Naive thymus-derived CD4-positive, alpha-beta T cell (primary cell): ENCODE measurements at regions of chrX and their contacts with region 1.

Region 1: DNA sequence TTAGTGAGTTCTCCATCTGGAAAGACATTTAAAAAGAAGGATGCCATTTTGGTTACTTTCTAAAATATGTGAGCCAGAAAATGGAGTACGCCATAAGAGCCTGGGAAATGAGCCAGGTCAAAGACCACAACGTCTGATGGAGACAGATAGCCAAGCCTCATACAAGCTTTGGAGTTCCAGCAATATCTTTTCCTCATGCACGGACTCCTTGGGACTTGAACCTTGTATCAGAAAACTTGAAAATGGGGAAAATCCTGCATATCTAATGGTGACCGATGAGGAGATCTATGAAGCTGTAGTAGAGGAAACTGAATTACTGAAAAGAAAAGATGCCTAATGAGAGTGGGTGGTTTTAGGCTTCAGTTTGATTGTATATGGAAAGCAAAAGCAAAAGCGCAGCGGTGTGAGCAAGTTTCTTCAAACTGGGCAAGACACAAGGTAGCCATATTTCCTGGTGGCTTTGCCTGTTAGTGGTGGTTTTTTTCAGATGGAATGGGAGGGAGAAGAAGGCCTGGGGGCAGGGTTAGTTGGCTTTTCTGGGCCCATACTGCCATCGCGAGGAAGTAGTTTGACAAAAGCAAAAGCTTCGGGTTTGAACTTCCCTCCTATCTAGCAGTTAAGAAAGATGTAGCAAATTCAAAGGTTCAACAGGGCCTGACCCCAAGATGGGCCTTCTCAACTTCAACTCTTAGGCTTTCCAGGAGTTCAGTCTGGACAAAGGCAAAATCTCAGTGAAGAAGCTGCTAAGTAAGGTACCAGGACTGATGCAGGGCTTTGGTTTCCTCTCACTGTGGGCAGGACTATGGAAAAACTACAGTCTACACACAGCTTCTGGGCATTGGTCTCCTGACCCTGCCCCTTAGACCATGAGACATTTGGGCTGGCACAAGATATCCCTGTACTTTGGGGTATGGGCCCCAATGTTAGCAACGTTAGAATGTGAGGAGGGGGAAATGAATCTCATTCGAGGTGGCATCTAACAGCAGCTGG is 210.0 kb upstream of the STK26 start:
- DNase-seq: peak; percentile 36 to 97 (median 95)
- ATAC-seq: peak; percentile 96
- H3K4me3 ChIP-seq: peak overlapping the region; percentile 69
- H3K4me3 Mint-ChIP-seq: peak overlapping the region; percentile 78 to 98 (median 90)
- H3K27ac ChIP-seq: peak overlapping the region; percentile 75
- H3K27ac Mint-ChIP-seq: peak overlapping the region; percentile 92 to 98 (median 95)
- H3K4me1 ChIP-seq: peaks cover 9% of the 10 kb centered on the region in 2 donors
- H3K4me1 Mint-ChIP-seq: peaks cover 2 to 35% (median 28%) of the 10 kb centered on the region in 7 donors
- H3K27me3 ChIP-seq: no peaks in the 10 kb centered on the region
- H3K27me3 Mint-ChIP-seq: no peaks in the 10 kb centered on the region

Region 2: GRCh38 chrX:130086447-130087206 is 1726.5 kb before region 1 on chrX:
- CTCF ChIA-PET with region 1: no interaction called
- POLR2A ChIA-PET with region 1: no interaction called
- intact Hi-C with region 1: loop called (anchors 2 to 10 kb)
- DNase-seq: peak in 8 of 9 donors; percentile 64 to 79 (median 74)
- ATAC-seq: peak; percentile 74
- H3K4me3 ChIP-seq: peak overlapping the region; percentile 67
- H3K4me3 Mint-ChIP-seq: peak overlapping the region; percentile 86 to 93 (median 89)
- H3K27ac ChIP-seq: peak overlapping the region; percentile 66
- H3K27ac Mint-ChIP-seq: peak overlapping the region; percentile 76 to 96 (median 91)
- H3K4me1 ChIP-seq: peaks cover 22 to 35% of the 10 kb centered on the region in 2 donors
- H3K4me1 Mint-ChIP-seq: peaks cover 15 to 71% (median 60%) of the 10 kb centered on the region in 7 donors
- H3K27me3 ChIP-seq: no peaks in the 10 kb centered on the region
- H3K27me3 Mint-ChIP-seq: no peaks in the 10 kb centered on the region

Region 3: DNA sequence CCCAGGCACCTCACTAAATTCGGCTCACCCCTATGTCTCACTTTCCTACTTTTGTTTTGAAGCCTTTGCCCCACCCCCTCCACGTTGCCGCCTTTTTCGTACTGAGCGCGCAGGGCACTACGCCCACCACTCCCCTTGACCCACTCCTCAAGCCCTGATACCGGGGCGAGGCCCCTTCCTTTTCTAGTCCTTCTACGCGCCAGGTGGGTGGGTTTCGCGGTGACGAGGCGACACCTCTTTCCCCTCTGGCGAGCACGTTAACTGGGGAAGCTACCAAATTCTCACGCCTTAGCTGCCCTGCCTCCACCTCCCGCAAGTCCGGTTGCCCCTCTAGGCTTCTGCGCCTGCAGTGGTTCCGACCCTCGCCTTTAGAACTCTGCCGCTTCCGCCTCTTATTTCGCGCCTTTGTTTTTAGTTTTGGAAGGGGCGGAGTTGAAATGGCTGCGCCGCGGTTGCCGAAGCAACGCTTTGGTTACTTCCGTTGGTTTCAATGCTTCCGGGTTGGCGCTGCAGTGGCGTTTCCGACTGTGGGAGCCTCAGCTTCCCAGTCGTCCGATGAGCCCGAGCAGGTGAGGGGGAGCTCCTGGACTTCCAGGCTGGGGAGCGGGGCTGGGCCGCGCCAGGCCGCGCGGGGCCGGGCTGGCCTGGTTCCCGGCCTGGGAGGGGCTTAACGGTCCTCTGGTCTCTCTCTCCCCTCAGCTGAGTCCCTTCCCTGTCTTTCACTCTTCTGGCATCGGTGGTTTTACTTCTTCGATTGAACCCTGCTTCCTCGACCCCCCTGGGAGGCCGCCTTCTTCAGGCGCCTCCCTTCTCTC is 1473.5 kb before region 1 on chrX and contains the start of gene SLC25A14:
- CTCF ChIA-PET with region 1: no interaction called
- POLR2A ChIA-PET with region 1: no interaction called
- intact Hi-C with region 1: loop called in 1 of 2 experiments (anchors 5 kb)
- DNase-seq: peak; percentile 33 to 79 (median 72)
- ATAC-seq: peak; percentile 94
- H3K4me3 ChIP-seq: peak within 1 kb of the TSS; percentile 90
- H3K4me3 Mint-ChIP-seq: peak within 1 kb of the TSS; percentile 89 to 99 (median 94)
- H3K27ac ChIP-seq: peak within 1 kb of the TSS; percentile 68
- H3K27ac Mint-ChIP-seq: peak within 1 kb of the TSS; percentile 80 to 95 (median 90)
- H3K4me1 ChIP-seq: peaks cover 4 to 5% of the 10 kb centered on the region in 2 donors
- H3K4me1 Mint-ChIP-seq: peaks cover 7 to 25% (median 21%) of the 10 kb centered on the region in 7 donors
- H3K27me3 ChIP-seq: no peaks in the 10 kb centered on the region
- H3K27me3 Mint-ChIP-seq: no peaks in the 10 kb centered on the region
- total RNA-seq, gene SLC25A14: 10.7 to 14.3 (median 13.8) TPM

Region 4: GRCh38 chrX:130902783-130903613 is 910.1 kb before region 1 on chrX and contains the start of gene ENOX2:
- CTCF ChIA-PET with region 1: no interaction called
- POLR2A ChIA-PET with region 1: no interaction called
- intact Hi-C with region 1: loop called (anchors 1 to 2 kb)
- DNase-seq: peak; percentile 51 to 90 (median 83)
- ATAC-seq: peak; percentile 98
- H3K4me3 ChIP-seq: peak within 1 kb of the TSS; percentile 79
- H3K4me3 Mint-ChIP-seq: no peak within 1 kb of the TSS
- H3K27ac ChIP-seq: peak within 1 kb of the TSS; percentile 93
- H3K27ac Mint-ChIP-seq: peak within 1 kb of the TSS in 6 of 9 donors; percentile 51 to 91 (median 71)
- H3K4me1 ChIP-seq: peaks cover 0 to 5% of the 10 kb centered on the region in 2 donors
- H3K4me1 Mint-ChIP-seq: peaks cover 5 to 14% (median 12%) of the 10 kb centered on the region in 7 donors
- H3K27me3 ChIP-seq: no peaks in the 10 kb centered on the region
- H3K27me3 Mint-ChIP-seq: no peaks in the 10 kb centered on the region
- total RNA-seq, gene ENOX2: 10.3 to 15.3 (median 12.1) TPM

Region 5: GRCh38 chrX:130975947-130976346 is 837.2 kb before region 1 on chrX:
- CTCF ChIA-PET with region 1: no interaction called
- POLR2A ChIA-PET with region 1: no interaction called
- intact Hi-C with region 1: loop called in 1 of 2 experiments (anchors 1 kb)
- DNase-seq: peak in 6 of 9 donors; percentile 11 to 31 (median 16)
- ATAC-seq: peak; percentile 54
- H3K4me3 ChIP-seq: no peak overlapping the region
- H3K4me3 Mint-ChIP-seq: no peak overlapping the region
- H3K27ac ChIP-seq: no peak overlapping the region
- H3K27ac Mint-ChIP-seq: no peak overlapping the region
- H3K4me1 ChIP-seq: no peaks in the 10 kb centered on the region
- H3K4me1 Mint-ChIP-seq: no peaks in the 10 kb centered on the region
- H3K27me3 ChIP-seq: no peaks in the 10 kb centered on the region
- H3K27me3 Mint-ChIP-seq: peaks cover 0 to 6% (median 0%) of the 10 kb centered on the region in 5 donors

Region 6: DNA sequence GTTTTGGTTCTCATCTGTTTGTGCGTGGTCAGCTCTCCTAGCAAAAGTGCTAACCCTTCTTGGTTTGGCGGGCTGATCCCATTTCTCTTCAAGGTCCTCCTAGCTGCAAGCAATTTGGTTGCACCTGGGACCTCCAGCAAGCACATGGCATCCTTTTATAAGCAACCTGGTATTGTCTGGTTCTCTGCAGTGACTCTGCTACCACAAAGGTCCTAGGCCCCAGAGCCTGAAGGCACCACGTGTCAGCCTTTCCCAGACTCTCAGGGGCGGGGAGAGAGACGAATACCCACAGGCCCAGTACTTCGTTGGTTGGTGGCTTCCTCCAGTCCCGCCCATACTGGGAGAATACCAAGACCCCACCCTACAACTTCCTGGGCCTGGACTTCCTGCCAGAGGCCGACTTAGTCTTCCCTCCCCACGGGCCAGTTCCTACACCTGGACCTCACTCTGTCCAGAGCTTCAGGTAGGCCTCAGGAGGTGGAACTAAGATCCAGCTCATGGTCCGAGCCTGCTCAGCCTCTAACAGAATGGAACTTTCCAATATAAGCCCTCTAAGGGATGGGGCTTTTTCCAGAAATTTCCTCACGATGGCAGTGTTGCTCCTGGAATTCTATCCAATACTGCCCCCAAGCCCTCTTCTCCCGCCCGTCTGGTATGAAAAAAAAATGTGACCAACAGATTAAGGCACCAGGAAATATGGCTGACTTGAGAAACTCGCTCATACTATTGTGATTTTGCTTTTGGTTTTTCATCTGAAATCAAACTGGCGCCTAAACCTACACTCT is 17.5 kb after region 1 on chrX:
- CTCF ChIA-PET with region 1: interaction called, 6 read pairs
- POLR2A ChIA-PET with region 1: interaction called, 7 read pairs
- intact Hi-C with region 1: loop called (anchors 1 kb)
- DNase-seq: peak in 8 of 9 donors; percentile 59 to 83 (median 72)
- ATAC-seq: peak; percentile 76
- H3K4me3 ChIP-seq: peak overlapping the region; percentile 37
- H3K4me3 Mint-ChIP-seq: peak overlapping the region; percentile 61 to 90 (median 72)
- H3K27ac ChIP-seq: peak overlapping the region; percentile 55
- H3K27ac Mint-ChIP-seq: peak overlapping the region; percentile 42 to 91 (median 81)
- H3K4me1 ChIP-seq: peaks cover 0 to 14% of the 10 kb centered on the region in 2 donors
- H3K4me1 Mint-ChIP-seq: peaks cover 1 to 44% (median 35%) of the 10 kb centered on the region in 7 donors
- H3K27me3 ChIP-seq: no peaks in the 10 kb centered on the region
- H3K27me3 Mint-ChIP-seq: no peaks in the 10 kb centered on the region

Region 7: GRCh38 chrX:132488180-132488705 is 675.1 kb after region 1 on chrX:
- CTCF ChIA-PET with region 1: no interaction called
- POLR2A ChIA-PET with region 1: no interaction called
- intact Hi-C with region 1: no loop called
- DNase-seq: peak in 7 of 9 donors; percentile 14 to 36 (median 26)
- ATAC-seq: peak; percentile 39
- H3K4me3 ChIP-seq: peak overlapping the region; percentile 82
- H3K4me3 Mint-ChIP-seq: peak overlapping the region; percentile 88 to 99 (median 94)
- H3K27ac ChIP-seq: peak overlapping the region; percentile 83
- H3K27ac Mint-ChIP-seq: peak overlapping the region; percentile 66 to 96 (median 92)
- H3K4me1 ChIP-seq: peaks cover 4 to 15% of the 10 kb centered on the region in 2 donors
- H3K4me1 Mint-ChIP-seq: peaks cover 19 to 66% (median 51%) of the 10 kb centered on the region in 7 donors
- H3K27me3 ChIP-seq: no peaks in the 10 kb centered on the region
- H3K27me3 Mint-ChIP-seq: peaks cover 0 to 10% (median 0%) of the 10 kb centered on the region in 5 donors

Region 8: GRCh38 chrX:132651421-132652086 is 838.4 kb after region 1 on chrX:
- CTCF ChIA-PET with region 1: no interaction called
- POLR2A ChIA-PET with region 1: no interaction called
- intact Hi-C with region 1: no loop called
- DNase-seq: no peak
- ATAC-seq: no peak
- H3K4me3 ChIP-seq: no peak overlapping the region
- H3K4me3 Mint-ChIP-seq: no peak overlapping the region
- H3K27ac ChIP-seq: no peak overlapping the region
- H3K27ac Mint-ChIP-seq: no peak overlapping the region
- H3K4me1 ChIP-seq: no peaks in the 10 kb centered on the region
- H3K4me1 Mint-ChIP-seq: peaks cover 0 to 2% (median 0%) of the 10 kb centered on the region in 7 donors
- H3K27me3 ChIP-seq: no peaks in the 10 kb centered on the region
- H3K27me3 Mint-ChIP-seq: peaks cover 0 to 2% (median 0%) of the 10 kb centered on the region in 5 donors

Region 9: GRCh38 chrX:132858018-132858417 is 1044.9 kb after region 1 on chrX:
- CTCF ChIA-PET with region 1: no interaction called
- POLR2A ChIA-PET with region 1: no interaction called
- intact Hi-C with region 1: loop called in 1 of 2 experiments (anchors 10 kb)
- DNase-seq: no peak
- ATAC-seq: no peak
- H3K4me3 ChIP-seq: no peak overlapping the region
- H3K4me3 Mint-ChIP-seq: peak overlapping the region in 1 of 10 donors; percentile 44
- H3K27ac ChIP-seq: no peak overlapping the region
- H3K27ac Mint-ChIP-seq: peak overlapping the region in 1 of 9 donors; percentile 76
- H3K4me1 ChIP-seq: no peaks in the 10 kb centered on the region
- H3K4me1 Mint-ChIP-seq: peaks cover 0 to 36% (median 5%) of the 10 kb centered on the region in 7 donors
- H3K27me3 ChIP-seq: no peaks in the 10 kb centered on the region
- H3K27me3 Mint-ChIP-seq: peaks cover 0 to 5% (median 0%) of the 10 kb centered on the region in 5 donors